Right ventricle myocardium superior (tissue), 1 donor: ENCODE measurements at regions of chr17 and their contacts with region 1.

Region 1: GRCh38 chr17:50026901-50027630 is 28.8 kb upstream of the ITGA3 start:
- DNase-seq: peak; percentile 91
- ATAC-seq: peak; percentile 94

Region 2: GRCh38 chr17:49851387-49852291 is 175.4 kb before region 1 on chr17:
- intact Hi-C with region 1: no loop called
- DNase-seq: peak; percentile 88
- ATAC-seq: peak; percentile 88

Region 3: GRCh38 chr17:49910094-49910857 is 116.8 kb before region 1 on chr17:
- intact Hi-C with region 1: no loop called
- DNase-seq: no peak
- ATAC-seq: no peak

Region 4: GRCh38 chr17:50087246-50087911 is 60.3 kb after region 1 on chr17:
- intact Hi-C with region 1: loop called (anchors 2 kb)
- DNase-seq: peak; percentile 80
- ATAC-seq: peak; percentile 90

Region 5: DNA sequence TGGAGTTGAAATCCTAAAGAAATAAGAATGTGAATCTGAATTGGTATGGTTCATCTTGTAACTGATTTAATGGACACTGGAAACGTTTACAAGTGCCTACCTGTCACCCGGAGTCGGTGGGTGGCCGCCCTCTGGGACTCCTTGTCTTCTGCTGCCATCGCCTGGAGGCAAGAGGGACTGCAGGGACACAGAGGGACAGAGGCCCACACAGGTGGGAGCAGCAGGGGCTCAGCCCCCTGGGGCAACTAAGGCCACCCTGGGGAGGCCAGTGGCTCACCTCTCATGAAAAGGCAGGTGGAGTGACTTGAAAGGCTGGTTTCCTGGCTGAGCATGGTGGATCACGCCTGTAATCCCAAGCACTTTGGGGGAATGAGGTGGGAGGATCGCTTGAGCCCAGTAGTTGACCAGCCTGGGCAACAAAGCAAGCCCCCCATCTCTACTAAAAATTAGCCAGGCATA is 270.4 kb after region 1 on chr17:
- intact Hi-C with region 1: loop called (anchors 10 kb)
- DNase-seq: peak; percentile 88
- ATAC-seq: peak; percentile 97